ENCODE measurements at regions of chr19 and their contacts with region 1.

Region 1: GRCh38 chr19:54023191-54023590 is 31.8 kb downstream of the CACNG6 start:
- DNase-seq: no peak
- ATAC-seq: no peak
- H3K4me3 ChIP-seq: no peak overlapping the region
- H3K27ac ChIP-seq: no peak overlapping the region
- H3K4me1 ChIP-seq: no peaks in the 10 kb centered on the region
- H3K27me3 ChIP-seq: peaks cover 0 to 4% (median 0%) of the 10 kb centered on the region in 3 donors
- CTCF ChIP-seq: no peak
- POLR2A ChIP-seq: no peak

Region 2: GRCh38 chr19:53792721-53793433 is 230.3 kb before region 1 on chr19:
- in situ Hi-C with region 1: loop called in 1 of 4 experiments (anchors 10 kb)
- intact Hi-C with region 1: loop called (anchors 5 kb)
- DNase-seq: peak; percentile 29 to 30
- ATAC-seq: no peak
- H3K4me3 ChIP-seq: no peak overlapping the region
- H3K27ac ChIP-seq: no peak overlapping the region
- H3K4me1 ChIP-seq: no peaks in the 10 kb centered on the region
- H3K27me3 ChIP-seq: no peaks in the 10 kb centered on the region
- CTCF ChIP-seq: peak; percentile 61 to 87 (median 72)
- POLR2A ChIP-seq: no peak

Region 3: DNA sequence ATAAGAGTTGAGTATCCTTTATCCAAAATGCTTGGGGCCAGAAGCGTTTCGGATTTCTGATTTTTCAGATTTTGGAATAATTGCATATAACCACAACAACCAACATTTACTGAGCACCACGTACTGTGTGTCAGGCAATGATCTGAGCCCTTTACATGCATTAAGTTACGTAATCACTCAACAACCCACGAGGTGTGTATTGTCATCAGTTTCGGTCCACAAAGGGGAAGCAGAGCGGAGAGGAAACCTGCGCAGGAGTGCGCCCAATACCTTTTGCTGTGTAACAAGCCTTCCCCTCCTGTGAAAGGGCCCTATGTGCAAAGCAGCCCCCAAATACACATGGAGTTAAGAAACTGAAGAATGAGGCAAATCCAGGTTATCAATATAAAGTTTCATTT is 178.3 kb before region 1 on chr19:
- in situ Hi-C with region 1: no loop called
- intact Hi-C with region 1: loop called (anchors 2 kb)
- DNase-seq: no peak
- ATAC-seq: no peak
- H3K4me3 ChIP-seq: no peak overlapping the region
- H3K27ac ChIP-seq: no peak overlapping the region
- H3K4me1 ChIP-seq: no peaks in the 10 kb centered on the region
- H3K27me3 ChIP-seq: no peaks in the 10 kb centered on the region
- CTCF ChIP-seq: no peak
- POLR2A ChIP-seq: no peak

Region 4: DNA sequence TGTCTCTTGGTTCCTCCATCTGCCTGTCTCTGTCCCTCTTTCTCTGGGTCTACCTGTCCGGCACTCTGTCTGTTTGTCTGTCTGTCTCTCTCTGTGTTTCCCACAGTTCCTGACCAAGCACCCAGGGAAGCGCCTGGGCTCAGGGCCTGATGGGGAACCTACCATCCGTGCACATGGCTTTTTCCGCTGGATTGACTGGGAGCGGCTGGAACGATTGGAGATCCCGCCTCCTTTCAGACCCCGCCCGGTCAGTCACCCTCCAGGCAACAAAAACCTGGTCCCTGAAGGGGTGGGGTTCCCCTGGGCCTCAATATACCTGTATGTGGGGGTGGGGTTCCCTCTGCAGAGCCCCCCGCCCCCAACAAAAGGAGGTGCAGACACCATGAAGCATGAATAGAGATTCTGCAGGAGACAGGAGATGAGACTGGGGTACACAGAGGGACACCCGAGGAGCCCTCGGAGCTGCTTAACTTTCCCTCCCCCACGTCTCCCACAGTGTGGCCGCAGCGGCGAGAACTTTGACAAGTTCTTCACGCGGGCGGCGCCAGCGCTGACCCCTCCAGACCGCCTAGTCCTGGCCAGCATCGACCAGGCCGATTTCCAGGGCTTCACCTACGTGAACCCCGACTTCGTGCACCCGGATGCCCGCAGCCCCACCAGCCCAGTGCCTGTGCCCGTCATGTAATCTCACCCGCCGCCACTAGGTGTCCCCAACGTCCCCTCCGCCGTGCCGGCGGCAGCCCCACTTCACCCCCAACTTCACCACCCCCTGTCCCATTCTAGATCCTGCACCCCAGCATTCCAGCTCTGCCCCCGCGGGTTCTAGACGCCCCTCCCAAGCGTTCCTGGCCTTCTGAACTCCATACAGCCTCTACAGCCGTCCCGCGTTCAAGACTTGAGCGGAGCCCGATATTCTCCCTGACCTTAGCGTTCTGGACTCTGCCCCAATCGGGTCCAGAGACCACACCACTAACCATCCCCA is 116.7 kb before region 1 on chr19:
- in situ Hi-C with region 1: loop called in 3 of 4 experiments (anchors 5 to 10 kb)
- intact Hi-C with region 1: no loop called
- DNase-seq: no peak
- ATAC-seq: no peak
- H3K4me3 ChIP-seq: peak overlapping the region in 1 of 4 donors; percentile 25
- H3K27ac ChIP-seq: no peak overlapping the region
- H3K4me1 ChIP-seq: peaks cover 0 to 3% of the 10 kb centered on the region in 2 donors
- H3K27me3 ChIP-seq: peaks cover 48 to 51% (median 50%) of the 10 kb centered on the region in 3 donors
- CTCF ChIP-seq: peak; percentile 46 to 94 (median 85)
- POLR2A ChIP-seq: no peak

Region 5: DNA sequence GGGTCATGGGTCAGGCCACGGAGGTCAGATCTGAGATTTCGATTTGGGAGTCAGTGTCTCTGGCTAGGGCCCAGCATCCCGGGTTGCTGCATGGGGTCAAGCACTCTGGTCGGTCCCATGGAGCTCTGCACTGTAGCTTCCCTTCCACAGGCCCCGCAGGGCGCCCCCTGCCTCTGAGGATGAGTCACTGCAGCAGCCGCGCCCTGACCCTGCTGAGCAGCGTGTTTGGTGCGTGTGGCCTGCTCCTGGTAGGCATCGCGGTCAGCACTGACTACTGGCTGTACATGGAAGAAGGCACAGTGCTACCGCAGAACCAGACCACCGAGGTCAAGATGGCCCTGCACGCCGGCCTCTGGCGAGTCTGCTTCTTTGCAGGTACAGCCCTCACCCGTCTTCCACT is 110.5 kb before region 1 on chr19:
- in situ Hi-C with region 1: loop called in 2 of 4 experiments (anchors 5 to 10 kb)
- intact Hi-C with region 1: no loop called
- DNase-seq: no peak
- ATAC-seq: no peak
- H3K4me3 ChIP-seq: no peak overlapping the region
- H3K27ac ChIP-seq: no peak overlapping the region
- H3K4me1 ChIP-seq: peaks cover 0 to 3% of the 10 kb centered on the region in 2 donors
- H3K27me3 ChIP-seq: peaks cover 53 to 54% (median 54%) of the 10 kb centered on the region in 3 donors
- CTCF ChIP-seq: no peak
- POLR2A ChIP-seq: no peak

Region 6: GRCh38 chr19:53982611-53983010 is 40.6 kb before region 1 on chr19:
- in situ Hi-C with region 1: no loop called
- intact Hi-C with region 1: loop called (anchors 5 kb)
- DNase-seq: peak in 1 of 2 donors; percentile 52
- ATAC-seq: no peak
- H3K4me3 ChIP-seq: peak overlapping the region in 3 of 4 donors; percentile 6 to 40 (median 29)
- H3K27ac ChIP-seq: no peak overlapping the region
- H3K4me1 ChIP-seq: peaks cover 12 to 17% of the 10 kb centered on the region in 2 donors
- H3K27me3 ChIP-seq: peaks cover 3 to 16% (median 5%) of the 10 kb centered on the region in 3 donors
- CTCF ChIP-seq: no peak
- POLR2A ChIP-seq: no peak

Measured in gastrocnemius medialis (tissue), 4 donors.